ENCODE measurements at regions of chr20 and their contacts with region 1.

Region 1: GRCh38 chr20:24781422-24781980 is 167.6 kb upstream of the CST7 start:
- DNase-seq: peak; percentile 54 to 70
- H3K4me3 ChIP-seq: no peak overlapping the region
- H3K4me3 Mint-ChIP-seq: no peak overlapping the region
- H3K27ac Mint-ChIP-seq: no peak overlapping the region
- H3K4me1 ChIP-seq: no peaks in the 10 kb centered on the region
- H3K4me1 Mint-ChIP-seq: no peaks in the 10 kb centered on the region
- H3K27me3 ChIP-seq: no peaks in the 10 kb centered on the region
- H3K27me3 Mint-ChIP-seq: peaks cover 5% of the 10 kb centered on the region
- CTCF ChIP-seq: peak; percentile 48 to 83

Region 2: DNA sequence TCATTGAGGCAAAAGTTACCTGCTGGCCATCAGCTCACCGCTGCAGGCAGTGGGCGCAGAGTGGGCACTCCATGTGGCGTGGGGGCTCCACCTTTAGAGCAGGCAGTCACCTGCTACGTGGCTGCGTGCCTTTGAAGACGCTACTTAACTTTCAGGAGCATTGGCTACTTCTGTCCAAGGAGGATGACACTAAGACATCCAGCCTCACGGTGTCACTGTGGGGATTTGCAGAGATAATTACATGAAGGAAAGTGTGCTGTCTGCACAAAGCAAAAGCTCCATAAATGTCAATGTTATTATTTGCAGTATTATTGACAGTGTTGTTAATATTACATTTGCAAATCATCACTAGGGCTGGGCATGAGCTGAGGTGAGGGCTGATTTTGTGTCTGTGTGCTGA is 478.1 kb before region 1 on chr20:
- CTCF ChIA-PET with region 1: no interaction called
- POLR2A ChIA-PET with region 1: no interaction called
- intact Hi-C with region 1: loop called (anchors 10 kb)
- DNase-seq: peak in 1 of 2 experiments; percentile 4
- H3K4me3 ChIP-seq: no peak overlapping the region
- H3K4me3 Mint-ChIP-seq: no peak overlapping the region
- H3K27ac Mint-ChIP-seq: no peak overlapping the region
- H3K4me1 ChIP-seq: no peaks in the 10 kb centered on the region
- H3K4me1 Mint-ChIP-seq: no peaks in the 10 kb centered on the region
- H3K27me3 ChIP-seq: no peaks in the 10 kb centered on the region; the same call in none of the 2 replicates
- H3K27me3 Mint-ChIP-seq: peaks cover 30% of the 10 kb centered on the region
- CTCF ChIP-seq: peak in 1 of 2 experiments; percentile 19

Region 3: GRCh38 chr20:24501764-24502556 is 279.5 kb before region 1 on chr20:
- CTCF ChIA-PET with region 1: interaction called, 3 read pairs
- POLR2A ChIA-PET with region 1: no interaction called
- intact Hi-C with region 1: loop called (anchors 10 kb)
- DNase-seq: no peak
- H3K4me3 ChIP-seq: no peak overlapping the region
- H3K4me3 Mint-ChIP-seq: no peak overlapping the region
- H3K27ac Mint-ChIP-seq: no peak overlapping the region
- H3K4me1 ChIP-seq: no peaks in the 10 kb centered on the region
- H3K4me1 Mint-ChIP-seq: no peaks in the 10 kb centered on the region
- H3K27me3 ChIP-seq: no peaks in the 10 kb centered on the region
- H3K27me3 Mint-ChIP-seq: peaks cover 15% of the 10 kb centered on the region
- CTCF ChIP-seq: no peak

Region 4: DNA sequence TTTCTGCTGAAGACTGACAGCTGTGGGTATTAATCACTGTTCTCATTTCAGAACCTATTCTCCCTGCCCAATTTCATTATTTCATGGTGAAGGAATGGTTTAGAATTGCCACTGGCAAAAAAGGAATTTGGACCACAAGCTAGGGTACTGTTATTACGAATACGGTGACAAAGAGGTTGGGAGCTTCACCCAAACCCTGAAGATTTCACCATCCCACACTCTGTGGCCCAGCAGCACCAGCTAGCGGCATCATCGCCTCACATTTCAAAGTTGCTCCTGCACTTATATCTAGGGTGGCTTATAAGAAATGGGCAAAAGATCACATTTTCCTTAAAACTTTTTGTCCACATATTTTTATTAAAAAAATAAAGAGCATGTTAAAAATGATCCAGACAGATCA is 76.0 kb before region 1 on chr20:
- CTCF ChIA-PET with region 1: interaction called, 3 read pairs
- POLR2A ChIA-PET with region 1: no interaction called
- intact Hi-C with region 1: loop called (anchors 2 kb)
- DNase-seq: no peak
- H3K4me3 ChIP-seq: no peak overlapping the region
- H3K4me3 Mint-ChIP-seq: no peak overlapping the region
- H3K27ac Mint-ChIP-seq: no peak overlapping the region
- H3K4me1 ChIP-seq: no peaks in the 10 kb centered on the region
- H3K4me1 Mint-ChIP-seq: no peaks in the 10 kb centered on the region
- H3K27me3 ChIP-seq: peaks cover 2% of the 10 kb centered on the region
- H3K27me3 Mint-ChIP-seq: peaks cover 16% of the 10 kb centered on the region
- CTCF ChIP-seq: no peak

Region 5: GRCh38 chr20:24917797-24918578 is 136.5 kb after region 1 on chr20:
- CTCF ChIA-PET with region 1: interaction called, 8 read pairs
- POLR2A ChIA-PET with region 1: no interaction called
- intact Hi-C with region 1: loop called (anchors 1 kb)
- DNase-seq: peak in 1 of 2 experiments; percentile 73
- H3K4me3 ChIP-seq: no peak overlapping the region
- H3K4me3 Mint-ChIP-seq: no peak overlapping the region
- H3K27ac Mint-ChIP-seq: no peak overlapping the region
- H3K4me1 ChIP-seq: peaks cover 6% of the 10 kb centered on the region; the same call in 1 of the 2 replicates
- H3K4me1 Mint-ChIP-seq: no peaks in the 10 kb centered on the region
- H3K27me3 ChIP-seq: no peaks in the 10 kb centered on the region
- H3K27me3 Mint-ChIP-seq: peaks cover 6% of the 10 kb centered on the region
- CTCF ChIP-seq: peak; percentile 91 to 94